GM10248 (cell line): ENCODE measurements at regions of chr12 and their contacts with region 1.

Region 1: DNA sequence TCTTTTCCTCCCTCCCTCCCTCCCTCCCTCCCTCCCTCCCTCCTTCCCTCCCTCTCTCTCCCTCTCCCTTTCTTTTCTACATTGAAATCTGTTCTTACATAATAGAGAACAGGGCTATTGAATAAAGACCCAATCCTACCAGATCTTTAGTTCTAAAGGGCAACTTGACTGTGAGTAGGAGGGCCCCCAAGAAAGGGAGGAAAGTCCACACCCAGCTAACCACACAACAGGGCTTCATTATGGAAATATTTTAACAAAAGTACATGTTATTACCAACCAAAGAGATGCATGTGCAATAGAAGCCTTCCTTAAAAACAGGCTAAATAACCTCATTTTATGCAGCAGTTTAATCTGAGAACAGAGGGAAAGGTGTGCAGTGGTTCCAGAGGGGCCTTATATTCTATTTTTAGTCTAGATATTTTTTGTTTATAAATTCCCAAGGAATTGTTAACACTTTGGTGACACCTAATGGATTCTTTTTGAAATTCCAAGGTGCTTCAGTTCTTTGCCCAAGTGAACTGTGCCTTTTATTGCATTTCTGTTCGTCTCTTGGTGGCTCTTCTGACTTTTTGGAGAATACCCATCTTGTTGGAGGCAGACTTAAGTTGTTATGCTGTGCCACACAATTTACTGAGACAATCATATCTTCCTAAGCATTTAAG is 63.0 kb downstream of the GNS start:
- DNase-seq: no peak
- CTCF ChIP-seq: no peak

Region 2: GRCh38 chr12:64544371-64545080 is 151.7 kb before region 1 on chr12:
- CTCF ChIA-PET with region 1: interaction called, 172 read pairs
- POLR2A ChIA-PET with region 1: no interaction called
- DNase-seq: no peak
- CTCF ChIP-seq: no peak

Region 3: DNA sequence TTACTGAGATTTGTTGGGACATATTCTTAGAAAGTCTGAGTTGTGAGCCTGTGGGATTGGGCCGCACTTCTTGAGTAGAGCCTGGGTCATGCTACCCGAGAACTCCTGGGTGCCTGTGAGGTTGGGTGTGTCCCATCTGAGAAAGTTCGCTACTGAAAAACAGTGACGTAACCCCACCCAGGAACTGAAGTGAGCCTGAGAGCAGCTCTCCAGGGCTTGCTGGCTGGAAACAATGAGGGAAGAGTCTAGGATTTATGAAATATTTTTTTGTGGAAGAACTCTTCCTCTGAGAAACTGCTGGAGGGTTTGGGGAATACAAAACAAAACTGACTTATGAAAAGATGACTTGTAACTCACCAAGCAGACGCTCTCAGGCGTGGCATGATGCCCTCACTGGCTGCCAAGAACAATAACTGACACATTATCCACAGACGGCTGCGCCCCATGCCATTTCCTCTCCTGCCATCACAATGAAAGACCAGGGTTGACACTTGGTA is 16.7 kb before region 1 on chr12:
- CTCF ChIA-PET with region 1: interaction called, 23 read pairs
- POLR2A ChIA-PET with region 1: interaction called, 4 read pairs
- DNase-seq: no peak
- CTCF ChIP-seq: no peak

Region 4: GRCh38 chr12:64706306-64706705 is 10.1 kb after region 1 on chr12:
- CTCF ChIA-PET with region 1: interaction called, 32 read pairs
- POLR2A ChIA-PET with region 1: interaction called, 5 read pairs
- DNase-seq: no peak
- CTCF ChIP-seq: no peak

Region 5: GRCh38 chr12:64714551-64714968 is 18.3 kb after region 1 on chr12:
- CTCF ChIA-PET with region 1: interaction called, 32 read pairs
- POLR2A ChIA-PET with region 1: no interaction called
- DNase-seq: peak; percentile 26
- CTCF ChIP-seq: no peak

Region 6: GRCh38 chr12:64733857-64734256 is 37.6 kb after region 1 on chr12:
- CTCF ChIA-PET with region 1: interaction called, 15 read pairs
- POLR2A ChIA-PET with region 1: no interaction called
- DNase-seq: no peak
- CTCF ChIP-seq: no peak